ENCODE measurements at regions of chr17 and their contacts with region 1.

Region 1: GRCh38 chr17:60473788-60474187 is 51.5 kb downstream of the CHCT1 start:
- DNase-seq: no peak
- ATAC-seq: no peak

Region 2: GRCh38 chr17:60106220-60107059 is 367.3 kb before region 1 on chr17:
- intact Hi-C with region 1: no loop called
- DNase-seq: no peak
- ATAC-seq: no peak

Region 3: GRCh38 chr17:60372790-60373483 is 100.9 kb before region 1 on chr17:
- intact Hi-C with region 1: no loop called
- DNase-seq: no peak
- ATAC-seq: peak in 1 of 2 donors; percentile 91

Region 4: GRCh38 chr17:60525685-60526514 is 52.1 kb after region 1 on chr17 and contains the start of gene APPBP2:
- intact Hi-C with region 1: loop called in 1 of 2 experiments (anchors 5 kb)
- DNase-seq: peak; percentile 90
- ATAC-seq: peak; percentile 98
- total RNA-seq, gene APPBP2: 23.4 to 26.5 TPM

Measured in left cardiac atrium (tissue), 4 donors.